PC-3 (cell line): ENCODE measurements at regions of chr10 and their contacts with region 1.

Region 1: DNA sequence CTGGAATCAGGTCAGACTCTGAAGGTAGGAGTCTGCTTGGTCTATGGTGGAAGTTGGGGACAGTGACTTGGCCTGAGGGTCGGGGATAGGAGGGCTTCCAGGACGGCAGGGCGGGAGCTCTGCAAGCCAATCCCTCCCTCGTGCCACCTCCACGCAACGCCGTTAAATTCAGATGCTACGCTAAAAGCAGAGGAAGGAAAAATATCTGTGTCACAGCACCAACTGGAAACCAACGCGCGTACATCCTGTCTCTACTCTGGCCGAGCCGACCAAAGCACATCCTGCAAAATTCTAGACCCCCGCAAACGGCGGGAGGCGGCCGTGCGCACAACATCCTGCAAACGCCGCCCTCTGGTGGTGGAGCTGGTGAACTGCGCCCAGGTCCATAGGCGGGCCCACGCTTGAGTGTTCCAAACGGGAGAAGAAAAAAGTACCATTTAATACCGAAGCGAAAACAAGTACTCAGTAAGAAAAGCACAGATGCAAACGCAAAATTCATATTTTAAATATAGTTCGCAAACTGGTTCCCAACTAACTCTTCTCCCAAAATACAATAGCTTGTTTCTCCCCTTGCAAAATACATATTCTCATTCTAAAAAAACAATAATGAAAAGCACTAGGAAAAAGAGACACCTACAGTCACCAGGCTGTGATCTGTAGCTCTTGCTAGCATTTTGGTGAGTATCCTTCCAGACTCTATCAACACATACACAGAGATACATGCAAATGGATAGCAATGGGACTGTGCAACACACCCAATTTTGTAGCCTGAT is 45.7 kb upstream of the HSPA12A start:
- DNase-seq: peak; percentile 70
- ATAC-seq: peak; percentile 82
- H3K4me3 ChIP-seq: peak overlapping the region; percentile 45
- H3K27ac ChIP-seq: no peak overlapping the region
- H3K4me1 ChIP-seq: no peaks in the 10 kb centered on the region
- H3K27me3 ChIP-seq: no peaks in the 10 kb centered on the region
- CTCF ChIP-seq: peak; percentile 90

Region 2: DNA sequence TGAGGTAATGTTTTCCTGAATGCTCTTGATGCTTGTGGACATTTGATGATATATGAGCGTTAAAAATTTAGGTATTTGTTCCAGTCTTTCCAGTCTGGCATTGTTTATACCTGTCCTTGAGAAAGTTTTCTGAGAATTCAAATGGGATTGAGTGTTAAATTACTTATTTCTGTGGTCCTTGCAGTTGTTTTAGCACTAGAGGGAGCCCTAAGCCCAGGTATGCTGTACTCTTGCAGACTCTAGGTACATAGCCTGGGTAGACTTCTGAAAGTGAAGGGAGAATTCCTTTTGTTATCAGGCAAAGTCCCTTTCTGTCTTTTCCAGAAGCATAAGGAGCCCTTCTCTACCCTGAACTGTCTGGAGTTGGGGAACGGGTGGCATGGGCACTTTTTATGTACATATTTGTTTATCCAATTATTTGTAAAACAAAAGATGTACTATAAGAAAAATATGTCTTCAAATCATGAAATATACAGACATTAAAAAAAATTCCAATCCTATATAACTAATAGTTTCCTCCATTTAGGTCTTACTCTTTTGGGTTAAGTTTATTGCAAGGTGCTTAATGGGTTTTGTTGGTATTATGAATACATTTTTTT is 1432.8 kb before region 1 on chr10:
- CTCF ChIA-PET with region 1: no interaction called
- POLR2A ChIA-PET with region 1: no interaction called
- intact Hi-C with region 1: loop called (anchors 10 kb)
- DNase-seq: peak; percentile 62
- ATAC-seq: peak; percentile 50; the same call in 1 of the 2 replicates
- H3K4me3 ChIP-seq: no peak overlapping the region
- H3K27ac ChIP-seq: no peak overlapping the region
- H3K4me1 ChIP-seq: no peaks in the 10 kb centered on the region
- H3K27me3 ChIP-seq: no peaks in the 10 kb centered on the region
- CTCF ChIP-seq: peak; percentile 75

Region 3: DNA sequence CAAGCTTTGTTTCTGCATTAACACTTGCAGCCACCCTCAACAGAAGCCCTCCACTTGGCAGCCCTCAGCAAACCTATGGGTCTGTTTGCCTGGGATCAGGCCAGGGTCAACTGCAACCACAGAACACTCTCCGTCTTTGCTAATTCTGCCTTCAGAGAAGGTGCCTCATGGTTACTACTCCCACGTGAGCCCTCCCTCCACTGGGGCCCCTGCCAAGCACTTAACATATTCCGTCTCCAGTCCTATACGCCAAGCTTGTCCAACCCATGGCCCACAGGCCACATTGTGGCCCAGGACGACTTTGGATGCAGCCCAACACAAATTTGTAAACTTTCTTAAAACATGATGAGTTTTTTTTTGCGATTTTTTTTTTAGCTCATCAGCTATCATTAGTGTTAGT is 100.4 kb before region 1 on chr10:
- CTCF ChIA-PET with region 1: interaction called, 8 read pairs
- POLR2A ChIA-PET with region 1: no interaction called
- intact Hi-C with region 1: loop called (anchors 1 kb)
- DNase-seq: no peak
- ATAC-seq: no peak
- H3K4me3 ChIP-seq: no peak overlapping the region
- H3K27ac ChIP-seq: no peak overlapping the region
- H3K4me1 ChIP-seq: no peaks in the 10 kb centered on the region
- H3K27me3 ChIP-seq: no peaks in the 10 kb centered on the region
- CTCF ChIP-seq: no peak

Region 4: DNA sequence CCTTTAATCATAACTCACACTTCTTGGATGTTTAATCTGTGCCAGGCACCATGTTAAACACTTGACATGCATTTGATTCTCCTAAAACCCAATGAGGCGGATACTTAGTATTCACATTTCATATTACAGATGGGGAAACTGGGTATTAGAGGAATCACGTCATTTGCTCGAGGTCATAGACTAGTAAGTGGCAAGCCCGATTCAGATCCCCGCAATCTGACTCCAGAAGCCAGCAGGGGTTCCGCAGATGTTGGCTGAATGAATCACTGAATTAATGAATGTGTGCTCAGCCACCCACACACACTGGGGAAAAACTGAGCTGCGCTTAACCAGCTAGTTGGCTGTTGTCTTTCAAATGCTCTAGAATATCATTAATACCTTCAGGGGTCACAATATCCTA is 38.7 kb after region 1 on chr10:
- CTCF ChIA-PET with region 1: no interaction called
- POLR2A ChIA-PET with region 1: no interaction called
- intact Hi-C with region 1: no loop called
- DNase-seq: no peak
- ATAC-seq: no peak
- H3K4me3 ChIP-seq: no peak overlapping the region
- H3K27ac ChIP-seq: no peak overlapping the region
- H3K4me1 ChIP-seq: no peaks in the 10 kb centered on the region
- H3K27me3 ChIP-seq: no peaks in the 10 kb centered on the region
- CTCF ChIP-seq: no peak